GM10248 (cell line): ENCODE measurements at regions of chr17 and their contacts with region 1.

Region 1: GRCh38 chr17:68771867-68772515 is 170.8 kb upstream of the FAM20A start:
- DNase-seq: peak; percentile 51
- CTCF ChIP-seq: peak; percentile 59

Region 2: DNA sequence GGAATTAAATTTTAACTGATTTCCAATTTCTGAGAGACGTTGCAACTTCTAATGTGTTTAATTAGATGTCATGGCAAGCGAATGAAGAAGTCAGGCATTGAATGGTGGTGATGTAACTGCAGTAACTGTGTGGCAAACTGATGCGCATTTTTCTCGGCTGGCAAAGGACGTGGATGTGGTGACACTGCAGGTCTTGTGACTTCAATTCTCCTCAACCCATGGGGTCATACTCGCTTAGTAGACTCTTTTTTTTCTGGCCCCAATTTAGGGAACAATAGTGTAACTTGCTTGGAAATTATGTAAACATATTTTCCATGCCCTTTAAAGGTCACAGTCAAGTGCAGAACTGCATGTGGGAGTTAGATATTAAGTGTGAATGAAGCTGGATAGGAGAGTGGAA is 169.0 kb before region 1 on chr17:
- CTCF ChIA-PET with region 1: no interaction called
- POLR2A ChIA-PET with region 1: no interaction called
- DNase-seq: no peak
- CTCF ChIP-seq: no peak

Region 3: DNA sequence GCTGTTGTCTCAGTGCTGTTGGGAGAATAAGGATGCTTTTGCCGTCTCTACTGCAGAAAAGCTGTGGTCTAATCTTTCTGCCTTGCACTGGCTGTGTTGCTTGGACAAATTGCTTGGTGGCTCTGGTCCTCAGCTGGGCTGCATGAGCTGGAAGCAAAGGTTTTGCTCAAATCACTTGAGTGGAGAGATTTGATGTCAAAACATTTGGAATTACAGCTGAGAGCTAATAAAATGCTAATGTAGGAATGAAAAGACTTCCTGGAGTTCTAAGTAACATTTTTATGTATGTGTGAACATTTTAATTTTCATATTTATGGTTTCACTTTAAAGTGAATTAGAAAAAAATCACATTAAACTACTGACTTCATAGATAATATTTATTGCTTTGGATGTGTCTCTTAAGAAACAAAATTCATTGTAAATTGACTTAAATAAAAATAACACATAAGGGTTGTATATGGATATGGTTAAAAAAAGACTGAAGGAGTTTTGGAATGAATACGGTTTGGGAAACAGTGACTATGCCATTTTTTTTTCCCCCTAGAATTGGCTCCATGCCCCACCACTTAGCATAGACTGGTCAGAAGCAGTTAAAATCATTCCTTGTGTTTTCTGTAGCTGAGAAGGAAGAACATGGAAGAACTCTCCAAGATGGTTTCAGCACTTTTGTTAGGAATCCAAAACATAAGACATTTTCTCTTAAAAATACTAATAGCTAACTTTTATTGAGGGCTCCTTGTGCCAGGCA is 131.6 kb before region 1 on chr17:
- CTCF ChIA-PET with region 1: no interaction called
- POLR2A ChIA-PET with region 1: no interaction called
- DNase-seq: no peak
- CTCF ChIP-seq: no peak

Region 4: GRCh38 chr17:68969101-68969500 is 197.1 kb after region 1 on chr17:
- CTCF ChIA-PET with region 1: interaction called, 11 read pairs
- POLR2A ChIA-PET with region 1: no interaction called
- DNase-seq: no peak
- CTCF ChIP-seq: no peak

Region 5: GRCh38 chr17:69235338-69235930 is 463.4 kb after region 1 on chr17:
- CTCF ChIA-PET with region 1: interaction called, 32 read pairs
- POLR2A ChIA-PET with region 1: interaction called, 3 read pairs
- DNase-seq: peak; percentile 48
- CTCF ChIP-seq: peak; percentile 66

Region 6: GRCh38 chr17:69246726-69247375 is 474.9 kb after region 1 on chr17:
- CTCF ChIA-PET with region 1: interaction called, 42 read pairs
- POLR2A ChIA-PET with region 1: no interaction called
- DNase-seq: peak; percentile 35
- CTCF ChIP-seq: peak; percentile 46